H1 (cell line): ENCODE measurements at regions of chr5 and their contacts with region 1.

Region 1: GRCh38 chr5:108260117-108260857 is 121.6 kb downstream of the FBXL17 start:
- DNase-seq: peak; percentile 54 to 79
- H3K4me3 ChIP-seq: no peak overlapping the region
- H3K27ac ChIP-seq: no peak overlapping the region
- H3K4me1 ChIP-seq: peaks cover 0 to 2% (median 0%) of the 10 kb centered on the region in 4 experiments; a peak in 3 of 7 replicates
- H3K27me3 ChIP-seq: no peaks in the 10 kb centered on the region
- CTCF ChIP-seq: peak; percentile 68 to 94 (median 87)
- EP300 ChIP-seq: no peak
- POLR2A ChIP-seq: no peak
- RAD21 ChIP-seq: peak; percentile 94 to 96

Region 2: GRCh38 chr5:108238936-108239887 is 21.1 kb before region 1 on chr5:
- CTCF ChIA-PET with region 1: interaction called, 27 read pairs
- POLR2A ChIA-PET with region 1: no interaction called
- DNase-seq: peak in 1 of 2 experiments; percentile 38
- H3K4me3 ChIP-seq: no peak overlapping the region
- H3K27ac ChIP-seq: no peak overlapping the region; the same call in 1 of the 2 replicates
- H3K4me1 ChIP-seq: peaks cover 0 to 8% (median 3%) of the 10 kb centered on the region in 4 experiments; a peak in 4 of 7 replicates
- H3K27me3 ChIP-seq: peaks cover 0 to 2% (median under 1%) of the 10 kb centered on the region in 4 experiments; a peak in 2 of 7 replicates
- CTCF ChIP-seq: peak in 2 of 3 experiments; percentile 1 to 5; a peak in 2 of 4 replicates
- EP300 ChIP-seq: no peak
- POLR2A ChIP-seq: no peak
- RAD21 ChIP-seq: no peak

Region 3: GRCh38 chr5:108271127-108271526 is 10.8 kb after region 1 on chr5:
- CTCF ChIA-PET with region 1: interaction called, 13 read pairs
- POLR2A ChIA-PET with region 1: interaction called, 3 read pairs
- DNase-seq: no peak
- H3K4me3 ChIP-seq: no peak overlapping the region
- H3K27ac ChIP-seq: no peak overlapping the region
- H3K4me1 ChIP-seq: no peaks in the 10 kb centered on the region
- H3K27me3 ChIP-seq: no peaks in the 10 kb centered on the region
- CTCF ChIP-seq: no peak
- EP300 ChIP-seq: no peak
- POLR2A ChIP-seq: no peak
- RAD21 ChIP-seq: no peak

Region 4: DNA sequence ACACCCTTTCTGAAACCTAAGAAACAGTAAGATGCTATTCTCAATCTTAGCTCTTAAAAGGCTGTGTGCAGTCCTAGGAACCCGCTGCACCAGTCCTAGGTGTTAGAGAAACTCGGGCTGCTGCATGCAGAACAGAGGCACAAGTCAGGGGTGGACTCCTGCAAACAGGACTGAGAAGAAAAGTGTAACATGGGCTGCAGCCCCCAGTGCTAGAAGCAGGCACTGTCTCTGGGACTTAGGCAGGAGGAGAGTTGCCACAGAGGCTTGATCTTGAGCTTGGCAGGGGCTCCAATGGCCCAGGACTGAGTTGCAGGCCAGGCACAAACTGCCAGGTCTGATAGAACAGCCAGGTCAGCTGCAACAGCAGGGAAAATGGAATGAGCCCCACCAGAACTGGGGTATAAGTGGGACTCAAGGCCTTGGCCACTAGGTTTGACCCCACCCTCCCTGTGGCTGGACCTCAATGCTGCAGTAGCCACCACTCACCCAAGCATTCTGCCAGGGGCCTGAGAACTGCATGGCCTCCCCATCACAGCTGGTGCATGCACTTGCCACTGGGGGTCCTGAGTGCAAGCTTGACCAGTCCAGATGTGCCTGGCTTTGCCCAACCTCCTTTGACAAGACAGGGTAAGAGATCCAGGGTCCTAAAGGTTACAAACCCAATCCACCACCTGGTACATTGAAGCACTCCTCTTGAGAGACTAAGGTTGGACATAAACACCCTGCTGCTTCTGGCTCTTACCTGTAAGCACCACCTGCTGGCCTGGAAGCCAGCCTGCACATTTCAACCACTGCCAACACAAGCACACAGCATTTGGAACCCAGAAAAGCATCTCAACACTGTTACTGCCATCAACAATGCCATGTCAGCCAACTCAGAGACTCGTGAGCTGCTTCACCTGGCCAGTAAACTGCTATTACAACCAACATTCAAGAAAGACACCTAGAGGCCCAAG is 18.3 kb after region 1 on chr5:
- CTCF ChIA-PET with region 1: interaction called, 13 read pairs
- POLR2A ChIA-PET with region 1: no interaction called
- DNase-seq: peak in 1 of 2 experiments; percentile 46
- H3K4me3 ChIP-seq: no peak overlapping the region
- H3K27ac ChIP-seq: no peak overlapping the region
- H3K4me1 ChIP-seq: peaks cover 0 to 2% (median 0%) of the 10 kb centered on the region in 4 experiments; a peak in 3 of 7 replicates
- H3K27me3 ChIP-seq: no peaks in the 10 kb centered on the region
- CTCF ChIP-seq: peak; percentile 11 to 50 (median 34); a peak in 2 of 4 replicates
- EP300 ChIP-seq: no peak
- POLR2A ChIP-seq: no peak
- RAD21 ChIP-seq: peak; percentile 30 to 40; a peak in 3 of 4 replicates

Region 5: GRCh38 chr5:108345541-108346171 is 85.4 kb after region 1 on chr5:
- CTCF ChIA-PET with region 1: interaction called, 29 read pairs
- POLR2A ChIA-PET with region 1: interaction called, 3 read pairs
- DNase-seq: no peak
- H3K4me3 ChIP-seq: no peak overlapping the region
- H3K27ac ChIP-seq: no peak overlapping the region
- H3K4me1 ChIP-seq: no peaks in the 10 kb centered on the region
- H3K27me3 ChIP-seq: no peaks in the 10 kb centered on the region
- CTCF ChIP-seq: peak in 1 of 3 experiments; percentile 15; a peak in 2 of 4 replicates
- EP300 ChIP-seq: no peak
- POLR2A ChIP-seq: no peak
- RAD21 ChIP-seq: peak in 1 of 2 experiments; percentile 55